Activated T-helper 1 cell treated with anti-CD3 and anti-CD28 coated beads, Interleukin-12 subunit alpha, Interleukin-12 subunit beta, Interleukin-2, Interleukin-4 antibody, amounts not matched to agents 30 ng/mL and 10 ng/mL and 1 ng/mL, durations not matched to agents 14 hours and 24 hours and 36 hours (primary cell): ENCODE measurements at regions of chr14 and their contacts with region 1.

Region 1: DNA sequence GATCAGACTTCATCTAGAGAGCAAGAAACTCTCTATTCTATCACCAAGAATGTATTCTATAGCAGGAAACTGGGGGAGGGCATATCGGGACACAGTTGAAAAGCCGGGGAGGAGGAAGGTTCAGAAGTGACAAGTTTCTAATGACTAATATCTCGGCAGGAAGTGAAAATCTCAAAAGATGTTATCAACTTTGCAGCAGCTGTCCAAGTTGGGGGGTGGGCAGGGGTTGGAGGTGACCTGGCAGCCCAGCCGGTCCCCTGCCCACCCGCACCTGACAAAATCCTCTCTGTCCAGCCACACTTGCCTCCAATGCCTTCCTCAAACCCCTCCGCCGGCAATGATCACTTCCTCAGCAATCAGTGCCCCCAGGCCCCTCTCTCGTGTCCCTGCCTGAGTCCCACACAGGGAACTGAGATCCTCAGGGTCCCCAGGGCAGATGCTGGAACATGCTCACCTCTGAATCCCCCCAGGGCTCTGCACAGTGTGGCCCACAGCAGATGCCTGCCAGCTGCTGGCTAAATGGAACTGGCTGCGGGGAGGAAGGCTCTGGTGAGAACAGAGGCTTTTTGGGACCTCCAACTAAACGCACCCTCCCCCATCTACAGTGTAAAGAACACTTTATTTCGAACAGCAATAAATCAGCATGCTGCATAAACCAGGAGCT is 43.9 kb downstream of the CCDC88C start:
- DNase-seq: peak; percentile 50
- H3K4me3 Mint-ChIP-seq: peak overlapping the region; percentile 75
- H3K27ac Mint-ChIP-seq: peak overlapping the region; percentile 94
- H3K4me1 Mint-ChIP-seq: peaks cover 91% of the 10 kb centered on the region
- H3K27me3 Mint-ChIP-seq: no peaks in the 10 kb centered on the region

Region 2: GRCh38 chr14:91244501-91244901 is 129.2 kb before region 1 on chr14 and contains the start of gene GPR68:
- intact Hi-C with region 1: loop called (anchors 1 kb)
- DNase-seq: no peak
- H3K4me3 Mint-ChIP-seq: peak within 1 kb of the TSS; percentile 85
- H3K27ac Mint-ChIP-seq: peak within 1 kb of the TSS; percentile 88
- H3K4me1 Mint-ChIP-seq: peaks cover 89% of the 10 kb centered on the region
- H3K27me3 Mint-ChIP-seq: no peaks in the 10 kb centered on the region
- total RNA-seq, gene GPR68: 4.5 and 5.4 TPM in 2 replicates

Region 3: DNA sequence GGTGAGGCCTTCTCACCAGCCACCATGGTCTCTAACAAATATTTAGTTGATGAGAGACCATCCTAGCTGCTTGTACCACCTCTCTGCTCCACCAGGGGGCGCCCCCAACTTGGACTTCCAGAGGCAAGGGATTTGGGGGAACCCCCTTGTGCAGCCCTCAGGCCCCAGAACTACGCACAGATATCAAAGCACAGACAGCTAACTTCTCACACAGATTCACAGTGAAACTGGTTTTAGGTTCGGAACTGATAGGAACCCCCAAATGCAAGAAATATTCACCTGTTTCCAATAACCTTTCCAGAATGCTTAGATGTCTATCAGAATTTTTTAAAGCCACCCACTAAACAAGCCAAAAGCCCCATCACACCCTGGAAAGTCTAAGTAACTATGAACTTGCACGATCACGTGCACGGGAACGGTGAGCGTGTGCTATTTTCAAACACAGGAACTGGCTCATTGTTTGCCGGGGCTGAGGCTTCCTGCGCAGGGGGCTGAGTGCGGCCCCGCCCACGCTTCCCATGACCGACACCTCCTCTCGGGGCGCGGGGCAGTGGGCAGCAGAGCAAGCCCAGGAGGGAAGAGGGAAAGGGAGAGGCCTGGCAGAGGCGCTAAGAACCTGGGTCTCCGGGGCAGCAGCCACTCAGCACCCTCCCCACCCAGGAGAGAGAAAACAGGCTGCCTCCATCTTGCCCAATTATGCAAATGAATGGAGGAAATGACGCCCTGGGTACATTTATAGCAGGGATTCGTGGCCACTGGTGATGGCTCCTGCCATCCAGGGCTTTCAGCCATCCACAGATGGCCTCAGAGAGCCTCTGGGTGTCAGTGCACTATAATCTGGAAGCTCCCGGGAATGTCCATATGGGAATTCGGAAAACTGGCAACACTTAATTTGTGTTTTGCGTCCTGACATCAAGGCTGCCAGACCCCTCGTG is 49.8 kb before region 1 on chr14:
- intact Hi-C with region 1: loop called (anchors 1 kb)
- DNase-seq: peak; percentile 84
- H3K4me3 Mint-ChIP-seq: peak overlapping the region; percentile 80
- H3K27ac Mint-ChIP-seq: peak overlapping the region; percentile 99
- H3K4me1 Mint-ChIP-seq: peaks cover 59% of the 10 kb centered on the region
- H3K27me3 Mint-ChIP-seq: no peaks in the 10 kb centered on the region

Region 4: DNA sequence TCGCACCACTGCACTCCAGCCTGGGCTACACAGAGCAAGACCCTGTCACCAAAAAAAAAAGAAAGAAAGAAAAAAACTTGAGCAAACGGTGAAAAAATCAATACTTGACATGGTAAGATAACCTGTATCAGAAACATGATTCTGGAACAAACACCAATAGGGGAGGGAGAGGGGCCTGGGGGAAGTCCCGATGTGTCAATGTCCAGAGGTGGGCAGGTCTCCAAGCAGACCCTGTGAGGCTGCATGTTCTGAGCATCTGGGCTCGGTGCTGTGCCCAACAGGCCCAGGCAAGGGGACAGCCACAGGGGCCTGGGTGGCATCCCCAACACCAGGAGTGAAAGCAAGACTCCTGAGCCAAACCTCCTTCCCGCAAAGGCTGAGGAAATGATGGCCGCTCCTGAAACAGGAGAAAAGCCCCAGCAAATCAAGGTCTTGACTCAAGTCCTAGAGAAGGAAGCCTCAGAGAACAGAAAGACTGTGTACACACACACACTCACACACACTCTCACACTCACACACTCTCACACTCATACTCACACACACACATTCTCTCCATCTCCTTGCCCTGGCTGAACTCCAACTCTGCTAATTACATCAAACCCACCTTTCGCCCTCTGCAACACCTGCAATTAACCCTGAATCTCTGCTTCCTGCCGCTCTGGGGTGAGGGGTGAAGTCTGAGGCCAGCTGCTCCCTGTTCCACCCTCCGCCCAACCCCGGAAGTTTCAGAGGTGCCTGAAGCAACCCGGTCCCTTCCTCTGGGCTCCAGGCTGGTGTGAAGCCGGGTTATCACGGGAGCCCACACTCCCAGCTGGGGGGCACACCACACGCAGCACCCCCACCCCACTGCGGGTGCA is 23.5 kb after region 1 on chr14:
- intact Hi-C with region 1: loop called (anchors 2 kb)
- DNase-seq: peak; percentile 54
- H3K4me3 Mint-ChIP-seq: peak overlapping the region; percentile 73
- H3K27ac Mint-ChIP-seq: peak overlapping the region; percentile 93
- H3K4me1 Mint-ChIP-seq: peaks cover 78% of the 10 kb centered on the region
- H3K27me3 Mint-ChIP-seq: no peaks in the 10 kb centered on the region

Region 5: GRCh38 chr14:91410771-91411536 is 37.2 kb after region 1 on chr14:
- intact Hi-C with region 1: loop called (anchors 1 kb)
- DNase-seq: no peak
- H3K4me3 Mint-ChIP-seq: peak overlapping the region; percentile 72
- H3K27ac Mint-ChIP-seq: peak overlapping the region; percentile 96
- H3K4me1 Mint-ChIP-seq: peaks cover 89% of the 10 kb centered on the region
- H3K27me3 Mint-ChIP-seq: no peaks in the 10 kb centered on the region